MCF 10A (cell line): ENCODE measurements at regions of chr7 and their contacts with region 1.

Region 1: DNA sequence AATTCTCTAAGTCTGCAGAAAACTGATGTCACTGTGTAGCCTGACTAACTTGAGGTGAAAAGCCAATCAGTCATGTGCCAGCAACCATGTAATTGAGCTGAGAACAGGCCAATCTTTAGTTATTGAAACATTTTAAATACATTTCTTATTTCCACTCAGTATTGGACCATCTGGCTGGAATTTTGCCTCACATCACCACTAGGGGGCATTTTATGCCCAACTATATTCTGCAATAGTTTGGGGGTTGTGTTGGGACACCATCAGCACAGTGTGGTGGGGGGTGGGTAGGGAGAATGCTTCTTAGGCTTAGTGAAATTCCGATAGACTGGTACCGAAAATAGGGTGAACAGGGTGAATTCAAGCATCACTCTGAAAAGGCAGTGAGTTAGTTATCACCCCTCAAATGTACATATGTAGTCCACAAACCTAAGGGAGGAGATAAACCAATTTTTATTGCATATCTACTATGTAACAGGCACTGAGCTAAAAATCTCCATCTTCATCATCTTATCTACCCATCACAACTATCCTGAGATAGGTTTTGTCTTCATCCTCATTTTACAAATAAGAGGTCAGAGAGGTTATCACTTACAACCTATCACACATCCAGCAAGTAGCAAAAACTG is 17.8 kb downstream of the NPSR1 start:
- DNase-seq: peak; percentile 34
- H3K4me3 Mint-ChIP-seq: no peak overlapping the region
- H3K27ac Mint-ChIP-seq: no peak overlapping the region
- H3K4me1 Mint-ChIP-seq: no peaks in the 10 kb centered on the region
- H3K27me3 Mint-ChIP-seq: no peaks in the 10 kb centered on the region
- CTCF ChIP-seq: peak; percentile 52

Region 2: GRCh38 chr7:34687529-34687928 is 11.7 kb after region 1 on chr7:
- CTCF ChIA-PET with region 1: interaction called, 18 read pairs
- POLR2A ChIA-PET with region 1: no interaction called
- intact Hi-C with region 1: no loop called
- DNase-seq: no peak
- H3K4me3 Mint-ChIP-seq: no peak overlapping the region
- H3K27ac Mint-ChIP-seq: no peak overlapping the region
- H3K4me1 Mint-ChIP-seq: no peaks in the 10 kb centered on the region
- H3K27me3 Mint-ChIP-seq: peaks cover 11% of the 10 kb centered on the region
- CTCF ChIP-seq: no peak

Region 3: DNA sequence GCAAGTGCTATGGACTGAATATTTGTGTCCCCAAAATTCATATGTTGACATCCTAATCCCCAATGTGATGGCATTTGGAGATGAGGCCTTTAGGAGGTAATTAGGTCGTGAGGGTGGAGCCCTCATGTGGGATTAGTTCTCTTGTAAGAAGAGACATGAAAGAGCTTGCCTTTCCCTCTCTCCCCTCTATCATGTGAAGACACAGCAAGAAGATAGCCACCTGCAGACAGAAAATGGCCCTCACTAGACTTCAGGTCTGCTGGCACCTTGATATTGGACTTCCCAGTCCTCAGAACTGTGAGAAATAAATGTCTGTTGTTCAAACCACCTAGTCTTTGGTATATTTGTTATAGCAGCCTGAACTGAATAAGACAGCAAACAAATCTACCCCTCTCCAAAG is 653.2 kb after region 1 on chr7:
- CTCF ChIA-PET with region 1: no interaction called
- POLR2A ChIA-PET with region 1: no interaction called
- intact Hi-C with region 1: no loop called
- DNase-seq: no peak
- H3K4me3 Mint-ChIP-seq: no peak overlapping the region
- H3K27ac Mint-ChIP-seq: no peak overlapping the region
- H3K4me1 Mint-ChIP-seq: no peaks in the 10 kb centered on the region
- H3K27me3 Mint-ChIP-seq: peaks cover 47% of the 10 kb centered on the region
- CTCF ChIP-seq: no peak